Activated CD4-positive, alpha-beta memory T cell treated with anti-CD3 and anti-CD28 coated beads for 36 hours (primary cell): ENCODE measurements at regions of chr3 and their contacts with region 1.

Region 1: DNA sequence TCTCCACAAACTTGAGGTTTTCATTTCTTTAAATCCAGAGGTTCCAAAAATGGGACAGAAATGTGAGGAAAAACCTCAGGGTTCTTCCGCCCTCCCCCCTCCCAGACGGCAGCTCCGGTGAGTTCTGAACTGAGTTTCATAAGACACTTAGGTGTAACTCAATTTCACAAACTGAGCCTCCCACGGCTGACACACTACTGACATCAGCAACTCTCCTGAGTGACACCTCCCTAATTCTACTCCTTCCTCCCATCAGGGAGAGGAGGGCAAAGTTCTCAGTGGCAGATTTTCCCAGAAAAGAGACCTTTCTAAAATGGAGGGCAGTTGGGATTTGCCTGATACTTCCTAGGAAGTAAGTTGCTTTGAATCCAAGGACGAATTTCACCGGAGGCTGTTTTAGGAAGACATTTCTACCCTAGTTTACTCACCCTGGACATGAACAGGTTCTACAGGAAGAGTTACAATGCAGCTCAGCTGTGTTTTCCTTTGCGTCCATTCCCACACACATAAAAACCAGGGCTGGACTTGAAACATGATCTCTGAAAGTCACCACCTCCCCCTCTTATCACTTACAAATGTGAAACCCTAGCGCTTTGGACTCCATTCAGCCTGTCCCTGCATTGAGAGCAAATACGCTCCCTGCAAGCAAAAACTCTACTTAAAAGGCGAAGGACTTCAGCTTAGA is 78.1 kb upstream of the LMOD3 start:
- DNase-seq: peak; percentile 82
- H3K4me3 Mint-ChIP-seq: peak overlapping the region; percentile 92
- H3K27ac Mint-ChIP-seq: peak overlapping the region; percentile 98
- H3K4me1 Mint-ChIP-seq: peaks cover 74% of the 10 kb centered on the region
- H3K27me3 Mint-ChIP-seq: no peaks in the 10 kb centered on the region

Region 2: DNA sequence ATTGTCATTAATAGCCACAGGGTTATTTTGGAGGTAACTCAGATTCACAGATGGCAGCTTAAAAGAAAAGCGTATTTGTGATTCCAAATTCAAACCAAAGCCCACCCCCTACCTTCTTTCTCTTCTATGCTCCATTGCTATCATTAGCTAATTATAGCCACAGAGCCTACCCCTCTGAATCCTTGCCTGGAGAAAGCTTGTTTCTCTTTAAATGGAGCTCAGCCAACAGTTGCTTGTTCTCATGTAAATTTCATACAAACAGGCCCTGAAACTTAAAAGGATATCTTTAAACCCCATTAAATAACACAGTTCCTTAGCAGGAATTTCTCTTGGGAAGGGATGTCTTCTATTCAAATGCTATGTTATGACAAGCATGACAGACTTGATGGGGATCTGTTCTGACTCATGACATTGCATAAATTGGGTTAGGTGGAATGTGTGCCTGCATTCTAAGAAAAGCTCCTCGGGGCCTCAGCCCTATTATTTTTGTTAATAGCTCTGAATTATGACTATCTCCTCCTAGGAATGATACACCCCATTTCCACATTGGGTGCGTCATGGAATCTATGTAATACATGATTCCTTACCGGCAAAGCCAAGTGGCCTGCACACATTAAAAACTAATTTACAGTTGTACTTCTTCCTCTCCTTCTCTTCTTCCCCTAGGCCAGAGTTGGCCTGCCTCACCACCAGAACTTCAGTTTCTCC is 533.9 kb before region 1 on chr3:
- CTCF ChIA-PET with region 1: no interaction called
- POLR2A ChIA-PET with region 1: no interaction called
- intact Hi-C with region 1: no loop called
- DNase-seq: no peak
- H3K4me3 Mint-ChIP-seq: no peak overlapping the region
- H3K27ac Mint-ChIP-seq: no peak overlapping the region
- H3K4me1 Mint-ChIP-seq: no peaks in the 10 kb centered on the region
- H3K27me3 Mint-ChIP-seq: no peaks in the 10 kb centered on the region

Region 3: DNA sequence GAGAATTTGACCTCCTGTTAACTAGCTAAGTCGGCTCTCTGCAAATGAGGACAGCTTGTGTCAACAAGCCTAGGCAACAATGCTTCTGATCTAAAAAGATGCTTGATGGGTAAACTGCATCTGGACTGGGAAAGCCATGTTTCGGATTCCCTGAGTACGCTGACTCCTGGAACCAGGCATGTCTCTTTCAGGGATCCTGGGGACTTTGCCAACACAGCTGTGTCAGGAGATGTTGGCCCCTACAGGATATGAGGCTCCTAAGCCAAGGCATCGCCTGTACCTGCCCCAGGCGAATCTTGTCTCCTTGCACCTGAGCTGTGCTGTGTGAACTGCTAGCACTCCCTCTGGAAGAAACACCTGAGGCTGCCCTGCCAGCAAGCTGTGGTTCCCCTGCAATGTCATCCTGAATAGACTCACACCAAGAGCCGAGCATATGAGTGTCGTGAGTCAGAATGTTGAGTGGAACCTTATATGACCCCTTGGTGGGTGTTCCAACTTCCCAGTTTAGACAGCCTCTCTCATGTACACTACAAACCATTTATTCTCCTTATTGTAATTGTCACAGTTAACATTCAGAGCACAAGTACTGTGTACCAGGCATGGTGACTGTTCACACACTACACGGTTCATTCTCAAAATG is 204.1 kb before region 1 on chr3:
- CTCF ChIA-PET with region 1: no interaction called
- POLR2A ChIA-PET with region 1: no interaction called
- intact Hi-C with region 1: loop called (anchors 5 kb)
- DNase-seq: peak; percentile 50
- H3K4me3 Mint-ChIP-seq: no peak overlapping the region
- H3K27ac Mint-ChIP-seq: peak overlapping the region; percentile 56
- H3K4me1 Mint-ChIP-seq: peaks cover 21% of the 10 kb centered on the region
- H3K27me3 Mint-ChIP-seq: no peaks in the 10 kb centered on the region

Region 4: DNA sequence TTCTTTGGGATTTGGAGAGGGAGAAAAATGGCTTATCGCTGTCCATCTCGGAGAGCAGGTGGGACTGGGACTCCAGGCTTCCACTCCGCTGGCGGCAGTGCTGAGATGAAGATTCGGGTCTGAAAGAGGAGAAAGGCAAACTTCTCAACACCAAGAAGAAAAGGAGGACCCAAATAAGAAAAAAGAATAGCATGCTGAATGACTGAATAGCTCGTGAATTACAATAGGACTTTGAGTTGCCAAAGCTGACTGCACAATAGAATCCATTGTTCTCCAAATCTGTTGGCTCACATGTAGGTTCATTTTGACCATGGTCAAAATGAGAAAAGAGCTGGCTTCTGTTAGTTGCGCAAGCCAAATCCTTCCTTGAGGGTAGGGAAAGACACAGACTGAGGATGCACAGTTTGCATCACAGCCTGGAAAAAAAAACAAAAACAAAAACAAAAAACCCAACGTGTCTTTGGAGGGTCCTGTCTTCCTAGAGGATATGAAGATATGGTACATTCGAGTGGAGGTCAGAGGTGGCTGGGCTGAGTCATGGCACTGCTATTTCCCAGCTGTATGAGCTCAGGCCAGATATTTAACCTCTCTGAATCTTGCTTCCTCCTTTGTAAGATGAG is 18.8 kb before region 1 on chr3:
- CTCF ChIA-PET with region 1: no interaction called
- POLR2A ChIA-PET with region 1: interaction called, 3 read pairs
- intact Hi-C with region 1: loop called (anchors 1 kb)
- DNase-seq: no peak
- H3K4me3 Mint-ChIP-seq: no peak overlapping the region
- H3K27ac Mint-ChIP-seq: no peak overlapping the region
- H3K4me1 Mint-ChIP-seq: peaks cover 42% of the 10 kb centered on the region
- H3K27me3 Mint-ChIP-seq: no peaks in the 10 kb centered on the region

Region 5: GRCh38 chr3:69219101-69219708 is 18.7 kb after region 1 on chr3:
- CTCF ChIA-PET with region 1: interaction called, 3 read pairs
- POLR2A ChIA-PET with region 1: interaction called, 7 read pairs
- intact Hi-C with region 1: loop called (anchors 1 kb)
- DNase-seq: no peak
- H3K4me3 Mint-ChIP-seq: no peak overlapping the region
- H3K27ac Mint-ChIP-seq: peak overlapping the region; percentile 1
- H3K4me1 Mint-ChIP-seq: peaks cover 14% of the 10 kb centered on the region
- H3K27me3 Mint-ChIP-seq: no peaks in the 10 kb centered on the region

Region 6: GRCh38 chr3:69250014-69250413 is 49.5 kb after region 1 on chr3:
- CTCF ChIA-PET with region 1: interaction called, 3 read pairs
- POLR2A ChIA-PET with region 1: no interaction called
- intact Hi-C with region 1: loop called (anchors 1 kb)
- DNase-seq: peak; percentile 77
- H3K4me3 Mint-ChIP-seq: peak overlapping the region; percentile 67
- H3K27ac Mint-ChIP-seq: peak overlapping the region; percentile 53
- H3K4me1 Mint-ChIP-seq: peaks cover 14% of the 10 kb centered on the region
- H3K27me3 Mint-ChIP-seq: no peaks in the 10 kb centered on the region

Region 7: DNA sequence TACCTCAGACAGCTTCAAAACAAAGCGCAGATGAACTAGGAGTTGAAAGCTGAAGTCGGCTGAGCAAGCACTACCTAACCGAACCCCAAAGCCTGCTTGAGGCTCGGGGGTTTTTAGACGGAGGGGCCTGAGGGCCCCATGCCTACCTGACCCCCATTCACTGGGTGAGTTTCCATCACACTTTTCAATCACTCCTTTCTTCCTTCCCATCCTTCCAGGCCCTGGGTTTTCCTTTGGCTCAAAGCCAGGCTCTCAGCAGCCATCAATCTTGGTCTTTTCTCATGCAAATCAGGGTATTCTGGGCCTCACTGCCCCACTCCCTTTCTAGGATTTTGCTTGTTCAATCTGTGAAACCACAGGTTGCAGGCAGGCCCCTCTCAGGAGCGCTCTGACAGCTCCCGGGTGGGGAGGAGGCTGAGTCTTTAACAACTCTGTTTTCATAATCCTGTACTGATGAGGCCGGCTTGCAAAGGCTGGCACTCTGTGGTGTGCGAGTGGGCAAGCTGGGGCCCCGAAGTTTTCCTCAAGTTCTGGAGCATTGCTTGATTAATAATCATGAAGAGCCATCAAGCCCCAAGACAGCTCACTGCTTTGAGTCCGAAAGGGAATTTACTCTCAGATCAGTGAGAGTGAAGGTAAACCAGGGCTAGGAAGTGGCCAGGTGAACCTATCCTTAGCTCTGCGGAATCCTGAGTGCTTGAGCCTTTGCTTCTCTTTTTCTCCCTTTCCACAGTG is 87.8 kb after region 1 on chr3:
- CTCF ChIA-PET with region 1: no interaction called
- POLR2A ChIA-PET with region 1: interaction called, 22 read pairs
- intact Hi-C with region 1: loop called (anchors 1 kb)
- DNase-seq: peak; percentile 86
- H3K4me3 Mint-ChIP-seq: peak overlapping the region; percentile 31
- H3K27ac Mint-ChIP-seq: peak overlapping the region; percentile 61
- H3K4me1 Mint-ChIP-seq: peaks cover 29% of the 10 kb centered on the region
- H3K27me3 Mint-ChIP-seq: no peaks in the 10 kb centered on the region

Region 8: GRCh38 chr3:69359339-69359893 is 158.9 kb after region 1 on chr3:
- CTCF ChIA-PET with region 1: no interaction called
- POLR2A ChIA-PET with region 1: no interaction called
- intact Hi-C with region 1: no loop called
- DNase-seq: no peak
- H3K4me3 Mint-ChIP-seq: no peak overlapping the region
- H3K27ac Mint-ChIP-seq: no peak overlapping the region
- H3K4me1 Mint-ChIP-seq: peaks cover 2% of the 10 kb centered on the region
- H3K27me3 Mint-ChIP-seq: peaks cover 1% of the 10 kb centered on the region

Region 9: GRCh38 chr3:69433969-69434325 is 233.4 kb after region 1 on chr3:
- CTCF ChIA-PET with region 1: no interaction called
- POLR2A ChIA-PET with region 1: interaction called, 4 read pairs
- intact Hi-C with region 1: loop called (anchors 1 kb)
- DNase-seq: peak; percentile 38
- H3K4me3 Mint-ChIP-seq: no peak overlapping the region
- H3K27ac Mint-ChIP-seq: peak overlapping the region; percentile 66
- H3K4me1 Mint-ChIP-seq: peaks cover 47% of the 10 kb centered on the region
- H3K27me3 Mint-ChIP-seq: peaks cover 26% of the 10 kb centered on the region

Region 10: GRCh38 chr3:69838217-69838616 is 637.7 kb after region 1 on chr3:
- CTCF ChIA-PET with region 1: no interaction called
- POLR2A ChIA-PET with region 1: no interaction called
- intact Hi-C with region 1: no loop called
- DNase-seq: no peak
- H3K4me3 Mint-ChIP-seq: no peak overlapping the region
- H3K27ac Mint-ChIP-seq: no peak overlapping the region
- H3K4me1 Mint-ChIP-seq: no peaks in the 10 kb centered on the region
- H3K27me3 Mint-ChIP-seq: no peaks in the 10 kb centered on the region